ENCODE measurements at regions of chr19 and their contacts with region 1.

Region 1: DNA sequence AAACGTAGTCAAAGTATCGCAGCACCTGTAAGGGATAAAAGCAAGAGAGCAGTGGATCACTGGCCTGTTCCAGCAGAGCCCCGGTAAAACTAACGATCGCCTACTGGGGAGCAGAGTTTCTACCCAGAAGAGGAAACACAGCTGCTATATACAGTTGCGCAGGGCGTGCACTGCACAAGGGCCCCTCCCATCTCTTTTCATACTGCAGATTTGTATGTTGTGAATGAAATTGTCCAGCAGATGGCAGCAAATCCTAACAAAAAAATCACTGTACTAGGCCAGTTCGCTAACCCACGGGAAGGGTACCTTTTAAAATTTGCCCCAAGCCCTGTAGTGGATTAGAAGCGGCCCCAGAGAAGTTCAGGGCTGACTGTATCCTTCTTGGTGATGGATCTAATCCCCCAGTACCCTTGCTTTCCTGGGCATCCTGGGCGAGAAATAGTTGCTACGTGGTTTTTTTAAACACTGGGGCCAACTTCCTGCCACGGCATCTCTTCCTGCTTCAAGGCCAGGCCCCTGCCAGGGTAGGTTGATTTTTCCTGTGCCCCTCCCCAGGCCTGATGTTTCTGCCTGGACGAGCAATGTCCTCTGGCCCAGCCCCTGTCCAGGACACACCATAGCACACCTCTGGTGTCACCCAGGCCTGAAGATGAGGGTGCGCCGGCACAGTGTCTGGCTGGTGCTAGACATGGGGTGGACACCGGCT is 127.0 kb downstream of the IER2 start:
- DNase-seq: peak; percentile 17
- H3K4me3 ChIP-seq: no peak overlapping the region
- H3K27me3 ChIP-seq: no peaks in the 10 kb centered on the region
- CTCF ChIP-seq: peak; percentile 51

Region 2: GRCh38 chr19:13574933-13575332 is 297.7 kb after region 1 on chr19:
- CTCF ChIA-PET with region 1: interaction called, 14 read pairs
- POLR2A ChIA-PET with region 1: interaction called, 15 read pairs
- DNase-seq: no peak
- H3K4me3 ChIP-seq: no peak overlapping the region
- H3K27me3 ChIP-seq: no peaks in the 10 kb centered on the region
- CTCF ChIP-seq: peak; percentile 54

Measured in BJ (cell line).